Dendritic cell treated with granulocyte-macrophage colony-stimulating factor and Interleukin-4, amounts not matched to agents 40 ng/mL and 50 ng/mL, for 4 days (primary cell): ENCODE measurements at regions of chr1 and their contacts with region 1.

Region 1: GRCh38 chr1:226407497-226408284 is at the start of gene PARP1:
- H3K4me3 Mint-ChIP-seq: peak within 1 kb of the TSS; percentile 99
- H3K27ac Mint-ChIP-seq: peak within 1 kb of the TSS; percentile 91
- H3K4me1 Mint-ChIP-seq: peaks cover 41% of the 10 kb centered on the region
- H3K27me3 Mint-ChIP-seq: no peaks in the 10 kb centered on the region

Region 2: GRCh38 chr1:226308723-226309315 is 98.9 kb before region 1 on chr1 and contains the start of gene LIN9:
- intact Hi-C with region 1: loop called (anchors 5 kb)
- H3K4me3 Mint-ChIP-seq: peak within 1 kb of the TSS; percentile 91
- H3K27ac Mint-ChIP-seq: peak within 1 kb of the TSS; percentile 83
- H3K4me1 Mint-ChIP-seq: peaks cover 15% of the 10 kb centered on the region
- H3K27me3 Mint-ChIP-seq: peaks cover 12% of the 10 kb centered on the region

Region 3: GRCh38 chr1:226831953-226832352 is 424.3 kb after region 1 on chr1:
- intact Hi-C with region 1: no loop called
- H3K4me3 Mint-ChIP-seq: no peak overlapping the region
- H3K27ac Mint-ChIP-seq: no peak overlapping the region
- H3K4me1 Mint-ChIP-seq: peaks cover 13% of the 10 kb centered on the region
- H3K27me3 Mint-ChIP-seq: peaks cover 8% of the 10 kb centered on the region